ENCODE measurements at regions of chr5 and their contacts with region 1.

Region 1: DNA sequence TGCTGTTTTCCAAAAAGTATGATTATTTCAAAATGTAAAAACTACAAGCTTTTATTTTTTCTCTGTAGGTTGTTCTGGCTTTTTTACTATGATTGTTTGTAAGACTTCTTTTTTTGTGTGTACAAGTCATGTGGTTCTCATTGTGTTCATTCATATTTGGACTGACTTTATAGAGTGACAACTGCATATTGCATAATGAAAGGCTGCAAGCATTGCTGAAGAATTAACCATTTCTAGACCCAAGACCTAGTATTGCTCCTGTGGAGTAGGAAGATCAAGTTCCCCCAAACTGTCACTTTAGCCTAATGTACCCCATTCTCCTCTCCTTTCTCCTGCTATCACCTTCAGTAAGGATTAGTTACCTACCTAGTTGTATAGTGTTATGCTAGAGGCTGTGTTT is 10.0 kb downstream of the MAP1B start:
- DNase-seq: peak; percentile 10

Region 2: GRCh38 chr5:71757590-71758543 is 359.4 kb before region 1 on chr5:
- in situ Hi-C with region 1: no loop called
- DNase-seq: peak; percentile 64

Region 3: DNA sequence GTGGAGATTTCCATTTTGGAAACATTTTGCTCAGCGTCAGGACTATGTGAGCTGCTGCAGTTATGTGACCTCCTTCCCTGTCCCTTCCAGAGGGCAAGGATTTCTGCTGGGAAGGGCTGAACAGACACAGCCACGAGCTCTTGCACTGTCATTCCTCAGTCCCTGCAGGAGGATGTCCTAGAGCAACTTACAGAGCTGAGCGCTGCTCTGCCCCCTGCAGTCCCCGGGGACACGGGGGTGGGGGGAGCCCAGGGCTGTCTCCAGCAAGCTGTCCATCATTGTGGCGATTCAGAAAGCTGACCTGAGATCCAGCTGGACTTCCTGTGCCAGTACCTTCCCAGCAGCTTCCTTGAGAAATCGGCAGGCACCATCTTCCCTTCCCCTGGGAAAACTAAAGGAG is 38.0 kb before region 1 on chr5:
- in situ Hi-C with region 1: loop called (anchors 5 kb)
- DNase-seq: peak; percentile 35